Activated CD4-positive, alpha-beta memory T cell treated with anti-CD3 and anti-CD28 coated beads for 36 hours (primary cell): ENCODE measurements at regions of chr22 and their contacts with region 1.

Region 1: DNA sequence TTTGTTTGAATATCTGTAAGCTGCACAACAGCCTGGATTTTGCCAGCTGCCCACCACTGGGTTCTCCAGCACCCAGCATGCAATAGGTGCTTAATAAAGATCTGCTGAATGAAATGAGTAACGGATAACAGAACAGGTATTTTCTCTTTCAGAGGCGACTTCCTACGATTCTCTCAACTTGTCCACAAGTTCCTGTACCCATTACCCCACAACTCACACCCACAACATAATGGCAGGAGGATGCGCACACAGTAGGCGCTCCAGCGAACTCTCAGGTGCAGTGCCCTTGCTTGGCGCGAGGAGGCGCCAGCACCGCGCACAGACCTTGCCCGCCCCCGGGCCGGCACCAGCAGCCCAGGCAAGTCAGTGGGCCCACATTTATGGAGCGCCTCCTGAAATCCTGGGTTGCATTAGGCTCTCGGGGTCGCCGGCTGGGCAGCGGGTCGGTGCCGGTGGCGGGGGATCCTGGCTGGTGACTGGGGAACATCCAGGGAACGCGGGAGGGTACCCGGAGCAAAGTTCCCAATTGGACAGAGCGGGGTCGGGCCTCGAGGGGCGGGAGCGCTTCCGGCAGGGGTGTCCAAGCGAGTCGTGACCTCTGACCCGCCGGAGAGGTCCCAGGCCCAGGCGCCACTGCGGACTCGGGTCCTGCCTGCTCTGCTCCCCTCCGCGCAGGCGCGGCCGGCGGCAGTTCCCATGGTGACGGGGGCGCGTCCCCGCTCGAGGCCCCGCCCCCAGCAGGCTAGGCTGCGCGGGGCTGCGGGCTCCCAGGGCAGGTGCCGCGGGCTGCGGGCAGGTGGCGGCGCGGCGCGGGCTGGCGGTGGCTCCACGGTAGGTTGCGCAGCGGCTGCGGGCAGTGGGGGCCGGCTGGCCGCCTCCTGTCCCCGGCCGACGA is at the start of gene KIAA1671:
- DNase-seq: peak; percentile 89
- H3K4me3 Mint-ChIP-seq: peak within 1 kb of the TSS; percentile 74
- H3K27ac Mint-ChIP-seq: peak within 1 kb of the TSS; percentile 0
- H3K4me1 Mint-ChIP-seq: peaks cover 14% of the 10 kb centered on the region
- H3K27me3 Mint-ChIP-seq: peaks cover 49% of the 10 kb centered on the region
- total RNA-seq, gene KIAA1671: 6.5 to 6.8 TPM

Region 2: GRCh38 chr22:24938741-24939341 is 13.3 kb before region 1 on chr22:
- CTCF ChIA-PET with region 1: interaction called, 15 read pairs
- POLR2A ChIA-PET with region 1: no interaction called
- intact Hi-C with region 1: no loop called
- DNase-seq: peak; percentile 20
- H3K4me3 Mint-ChIP-seq: no peak overlapping the region
- H3K27ac Mint-ChIP-seq: no peak overlapping the region
- H3K4me1 Mint-ChIP-seq: no peaks in the 10 kb centered on the region
- H3K27me3 Mint-ChIP-seq: peaks cover 3% of the 10 kb centered on the region

Region 3: GRCh38 chr22:24994070-24994763 is 42.0 kb after region 1 on chr22:
- CTCF ChIA-PET with region 1: no interaction called
- POLR2A ChIA-PET with region 1: no interaction called
- intact Hi-C with region 1: loop called (anchors 1 kb)
- DNase-seq: peak; percentile 78
- H3K4me3 Mint-ChIP-seq: no peak overlapping the region
- H3K27ac Mint-ChIP-seq: peak overlapping the region; percentile 56
- H3K4me1 Mint-ChIP-seq: peaks cover 15% of the 10 kb centered on the region
- H3K27me3 Mint-ChIP-seq: peaks cover 26% of the 10 kb centered on the region

Region 4: GRCh38 chr22:25027959-25028840 is 76.0 kb after region 1 on chr22:
- CTCF ChIA-PET with region 1: interaction called, 4 read pairs
- POLR2A ChIA-PET with region 1: no interaction called
- intact Hi-C with region 1: loop called (anchors 1 kb)
- DNase-seq: peak; percentile 45
- H3K4me3 Mint-ChIP-seq: no peak overlapping the region
- H3K27ac Mint-ChIP-seq: no peak overlapping the region
- H3K4me1 Mint-ChIP-seq: peaks cover 15% of the 10 kb centered on the region
- H3K27me3 Mint-ChIP-seq: no peaks in the 10 kb centered on the region

Region 5: DNA sequence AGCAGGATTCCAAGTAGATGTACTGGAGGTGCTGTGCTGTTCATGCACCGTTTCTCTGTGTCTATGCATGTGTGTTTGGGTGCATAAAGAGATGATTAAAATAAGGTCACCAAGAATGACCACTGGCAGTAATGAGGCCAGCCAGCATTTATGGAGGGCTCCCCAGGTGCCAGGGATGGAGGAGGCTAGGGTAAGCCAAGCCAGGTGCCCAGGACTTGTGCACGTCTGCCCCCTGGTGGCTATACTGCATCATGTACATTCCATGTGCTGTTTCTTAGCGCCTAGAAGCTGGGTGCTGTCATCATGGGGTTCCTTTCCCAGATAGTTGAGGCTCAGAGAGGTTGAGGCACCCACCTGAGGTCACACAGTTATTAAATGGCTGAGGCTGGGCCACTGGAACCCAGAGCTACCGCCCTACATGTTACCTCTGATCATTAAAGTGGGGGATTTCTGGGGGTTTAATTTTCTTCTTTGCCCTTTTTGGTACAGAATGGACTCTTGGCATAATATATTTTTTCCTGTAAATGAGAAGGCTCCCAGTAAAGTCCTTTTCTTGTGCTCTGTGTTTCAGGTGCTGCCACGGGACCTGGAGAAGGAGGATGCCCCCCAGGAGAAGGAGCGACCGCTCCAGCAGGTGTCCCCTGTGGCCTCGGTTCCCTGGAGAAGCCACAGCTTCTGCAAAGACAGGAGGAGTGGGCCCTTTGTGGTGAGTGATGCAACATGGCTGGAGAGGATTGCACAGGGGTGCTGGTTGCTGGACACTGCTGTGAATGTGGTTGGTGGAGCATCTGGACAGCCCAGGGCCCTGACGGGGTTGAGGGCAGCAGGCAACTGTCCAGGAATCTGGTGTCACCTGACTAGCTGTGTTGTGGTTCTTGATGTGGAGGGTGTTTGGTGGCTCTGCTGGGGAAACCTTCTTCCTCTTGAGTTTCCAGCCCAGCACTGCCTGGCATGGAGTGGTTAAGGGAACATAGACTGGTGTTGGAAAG is 96.8 kb after region 1 on chr22:
- CTCF ChIA-PET with region 1: interaction called, 210 read pairs
- POLR2A ChIA-PET with region 1: no interaction called
- intact Hi-C with region 1: loop called (anchors 1 kb)
- DNase-seq: peak; percentile 80
- H3K4me3 Mint-ChIP-seq: no peak overlapping the region
- H3K27ac Mint-ChIP-seq: no peak overlapping the region
- H3K4me1 Mint-ChIP-seq: peaks cover 8% of the 10 kb centered on the region
- H3K27me3 Mint-ChIP-seq: peaks cover 6% of the 10 kb centered on the region